ENCODE measurements at regions of chr19 and their contacts with region 1.

Region 1: GRCh38 chr19:4400135-4400936 is at the start of gene SH3GL1:
- DNase-seq: peak; percentile 87
- H3K27ac ChIP-seq: peak within 1 kb of the TSS; percentile 90
- CTCF ChIP-seq: peak; percentile 99

Region 2: DNA sequence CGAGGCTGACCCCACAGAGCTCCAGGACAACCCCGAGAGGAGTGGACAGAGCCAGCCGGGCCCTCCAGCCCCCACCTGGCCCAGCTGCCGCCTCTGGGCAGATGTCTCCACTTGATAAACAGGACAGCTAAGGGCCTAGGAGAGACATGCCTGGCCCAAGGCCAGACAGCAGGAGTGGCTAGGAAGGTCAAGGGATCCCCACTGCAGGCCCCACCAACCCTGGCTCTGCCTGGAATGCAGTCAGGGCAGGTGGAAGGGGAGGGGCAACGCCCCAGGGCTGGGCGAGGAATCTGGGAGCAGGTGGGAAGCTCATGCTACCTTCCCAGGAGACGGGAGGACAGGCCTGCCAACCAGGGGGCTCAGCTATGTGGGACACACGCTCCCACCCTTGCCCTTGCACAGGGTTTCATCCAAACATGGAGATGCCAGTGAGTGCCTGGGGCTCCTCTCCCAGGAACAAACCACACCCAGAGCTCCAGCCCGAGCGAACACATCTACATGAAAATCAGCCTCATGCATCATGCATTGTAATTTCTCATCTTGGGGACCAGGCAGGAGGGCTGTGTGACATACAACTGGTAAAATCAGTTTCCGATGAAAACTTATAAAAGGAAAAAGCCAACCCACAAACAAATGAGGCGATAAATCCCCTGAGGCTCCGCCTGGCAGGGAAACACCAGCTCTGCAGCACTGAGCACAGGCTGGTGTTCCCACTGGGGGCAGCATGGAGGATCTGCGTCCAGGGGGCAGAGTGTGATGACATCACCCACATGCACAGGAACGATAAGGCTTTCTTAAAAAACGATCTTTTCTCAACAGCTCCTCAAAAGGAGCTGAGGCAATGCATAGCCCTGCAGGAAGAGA is 24.9 kb before region 1 on chr19:
- CTCF ChIA-PET with region 1: interaction called, 25 read pairs
- POLR2A ChIA-PET with region 1: interaction called, 6 read pairs
- DNase-seq: peak; percentile 72
- H3K27ac ChIP-seq: peak overlapping the region; percentile 99
- CTCF ChIP-seq: no peak

Measured in RWPE1 (cell line).